Transverse colon (tissue), 4 donors: ENCODE measurements at regions of chr4 and their contacts with region 1.

Region 1: DNA sequence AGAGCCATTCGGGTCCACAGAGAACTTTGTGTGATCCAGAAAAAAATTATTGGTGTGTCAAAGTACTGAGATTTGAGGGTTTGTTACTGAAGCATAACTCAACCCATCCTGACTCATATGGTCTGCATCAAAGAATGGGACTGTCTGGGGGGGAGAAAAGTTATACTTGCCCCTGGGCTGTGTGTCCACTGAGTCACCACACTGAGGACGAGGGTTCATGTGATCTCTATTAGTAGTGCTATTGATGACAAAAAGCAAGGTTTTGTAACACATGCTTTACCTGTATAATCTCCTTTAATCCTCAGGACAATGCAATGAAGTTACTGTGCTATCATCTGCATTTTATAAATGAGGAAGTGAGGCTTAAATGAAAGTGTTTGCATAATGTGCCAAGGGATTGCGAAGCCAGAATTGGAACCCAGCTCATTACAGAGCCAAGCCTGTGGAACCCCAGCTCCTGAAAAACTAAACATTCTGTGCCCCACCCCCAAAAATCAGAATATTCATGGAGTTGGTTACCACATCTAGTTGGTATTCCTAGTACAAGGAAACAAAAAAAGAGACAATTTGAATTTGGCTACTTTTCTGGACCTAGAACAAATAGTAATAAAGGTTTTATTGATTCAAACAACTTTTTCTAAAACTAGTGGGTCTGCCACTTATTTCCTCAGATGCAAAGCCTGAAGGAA is 31.2 kb downstream of the CCDC149 start:
- DNase-seq: no peak
- H3K4me3 ChIP-seq: no peak overlapping the region
- H3K27ac ChIP-seq: no peak overlapping the region
- H3K4me1 ChIP-seq: no peaks in the 10 kb centered on the region
- H3K27me3 ChIP-seq: no peaks in the 10 kb centered on the region
- CTCF ChIP-seq: no peak
- EP300 ChIP-seq: no peak
- POLR2A ChIP-seq: no peak

Region 2: DNA sequence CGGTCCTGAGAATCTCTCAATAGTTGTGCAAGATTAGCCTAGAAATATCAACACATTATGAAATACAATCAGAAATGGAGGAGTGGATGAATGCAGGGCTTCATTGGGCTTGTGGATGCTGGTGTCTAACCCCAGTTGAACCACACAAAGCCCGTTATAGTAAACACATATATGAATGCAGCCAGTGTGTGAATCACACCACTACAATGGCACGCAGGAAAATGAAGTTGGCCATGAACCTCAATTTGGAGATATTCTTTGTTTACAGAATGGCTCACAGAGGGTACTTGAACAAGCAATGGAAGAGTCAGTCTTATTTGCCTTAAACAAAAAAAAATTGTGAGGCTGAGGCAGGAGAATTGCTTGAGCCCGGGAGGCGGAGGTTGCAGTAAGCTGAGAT is 28.5 kb before region 1 on chr4:
- in situ Hi-C with region 1: no loop called
- intact Hi-C with region 1: loop called (anchors 2 kb)
- DNase-seq: no peak
- H3K4me3 ChIP-seq: no peak overlapping the region
- H3K27ac ChIP-seq: peak overlapping the region in 1 of 4 donors; percentile 55
- H3K4me1 ChIP-seq: peaks cover 0 to 27% (median 4%) of the 10 kb centered on the region in 4 donors
- H3K27me3 ChIP-seq: no peaks in the 10 kb centered on the region
- CTCF ChIP-seq: no peak
- EP300 ChIP-seq: no peak
- POLR2A ChIP-seq: no peak